ENCODE measurements at regions of chr2 and their contacts with region 1.

Region 1: DNA sequence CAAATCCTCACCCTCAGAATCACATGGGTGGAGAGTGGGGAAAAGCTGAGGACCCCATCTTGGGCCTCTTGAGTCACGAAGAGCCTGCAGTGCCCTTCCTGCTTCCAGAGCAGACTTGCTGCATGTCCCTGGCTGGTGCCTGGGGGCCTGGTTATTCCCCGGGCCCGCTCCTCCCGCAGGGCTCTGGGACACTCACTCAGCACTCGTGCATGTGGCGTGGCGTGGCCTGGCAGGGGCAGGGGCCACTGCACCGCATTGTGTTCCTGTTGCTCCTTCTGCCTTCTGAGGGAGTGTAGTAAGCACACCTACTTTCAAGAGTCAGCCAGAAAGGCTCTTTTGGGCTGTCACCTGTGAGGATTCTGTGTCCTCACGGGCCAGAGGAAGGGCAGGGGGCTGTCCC is 17.4 kb upstream of the MZT2A start:
- DNase-seq: no peak
- ATAC-seq: no peak
- H3K4me3 ChIP-seq: no peak overlapping the region
- H3K27ac ChIP-seq: no peak overlapping the region
- H3K4me1 ChIP-seq: no peaks in the 10 kb centered on the region
- H3K27me3 ChIP-seq: no peaks in the 10 kb centered on the region
- CTCF ChIP-seq: no peak

Region 2: DNA sequence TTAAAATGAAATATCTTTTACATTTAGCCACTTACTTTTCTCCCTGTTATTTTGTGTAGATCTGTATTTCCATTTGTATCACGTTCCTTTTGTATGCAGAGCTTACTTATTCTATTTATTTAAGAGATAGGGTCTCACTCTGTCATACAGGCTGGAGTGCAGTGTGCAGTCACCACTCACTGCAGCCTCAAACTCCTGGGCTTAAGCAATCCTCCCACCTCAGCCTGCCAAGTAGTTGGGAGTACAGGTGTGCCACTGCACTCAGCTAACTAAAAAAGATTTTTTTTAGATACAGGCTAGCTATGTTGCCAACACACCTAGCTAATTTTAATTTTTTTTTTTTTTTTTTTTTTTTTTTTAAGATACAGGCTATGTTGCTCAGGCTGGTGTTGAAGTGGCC is 1142.9 kb before region 1 on chr2:
- CTCF ChIA-PET with region 1: no interaction called
- POLR2A ChIA-PET with region 1: interaction called, 13 read pairs
- in situ Hi-C with region 1: no loop called
- intact Hi-C with region 1: no loop called
- DNase-seq: no peak
- ATAC-seq: no peak
- H3K4me3 ChIP-seq: no peak overlapping the region
- H3K27ac ChIP-seq: no peak overlapping the region
- H3K4me1 ChIP-seq: peaks cover 8% of the 10 kb centered on the region
- H3K27me3 ChIP-seq: no peaks in the 10 kb centered on the region
- CTCF ChIP-seq: no peak